ENCODE measurements at regions of chr20 and their contacts with region 1.

Region 1: GRCh38 chr20:22586645-22587310 is 2.4 kb upstream of the FOXA2 start:
- DNase-seq: no peak
- ATAC-seq: no peak
- H3K4me3 Mint-ChIP-seq: no peak overlapping the region
- H3K27ac Mint-ChIP-seq: no peak overlapping the region
- H3K4me1 Mint-ChIP-seq: peaks cover 1% of the 10 kb centered on the region
- H3K27me3 Mint-ChIP-seq: peaks cover 44% of the 10 kb centered on the region
- CTCF ChIP-seq: no peak

Region 2: GRCh38 chr20:21719592-21720214 is 867.1 kb before region 1 on chr20:
- CTCF ChIA-PET with region 1: no interaction called
- POLR2A ChIA-PET with region 1: no interaction called
- intact Hi-C with region 1: loop called (anchors 10 kb)
- DNase-seq: no peak
- ATAC-seq: no peak
- H3K4me3 Mint-ChIP-seq: no peak overlapping the region
- H3K27ac Mint-ChIP-seq: no peak overlapping the region
- H3K4me1 Mint-ChIP-seq: no peaks in the 10 kb centered on the region
- H3K27me3 Mint-ChIP-seq: peaks cover 31% of the 10 kb centered on the region
- CTCF ChIP-seq: peak; percentile 29

Region 3: GRCh38 chr20:22684072-22684762 is 97.4 kb after region 1 on chr20:
- CTCF ChIA-PET with region 1: no interaction called
- POLR2A ChIA-PET with region 1: no interaction called
- intact Hi-C with region 1: no loop called
- DNase-seq: no peak
- ATAC-seq: peak; percentile 37
- H3K4me3 Mint-ChIP-seq: no peak overlapping the region
- H3K27ac Mint-ChIP-seq: no peak overlapping the region
- H3K4me1 Mint-ChIP-seq: peaks cover 6% of the 10 kb centered on the region
- H3K27me3 Mint-ChIP-seq: no peaks in the 10 kb centered on the region
- CTCF ChIP-seq: no peak

Measured in activated B cell treated with CpG ODN at 0.5 μM for 24 hours (primary cell).